Caco-2 (cell line): ENCODE measurements at regions of chr22 and their contacts with region 1.

Region 1: DNA sequence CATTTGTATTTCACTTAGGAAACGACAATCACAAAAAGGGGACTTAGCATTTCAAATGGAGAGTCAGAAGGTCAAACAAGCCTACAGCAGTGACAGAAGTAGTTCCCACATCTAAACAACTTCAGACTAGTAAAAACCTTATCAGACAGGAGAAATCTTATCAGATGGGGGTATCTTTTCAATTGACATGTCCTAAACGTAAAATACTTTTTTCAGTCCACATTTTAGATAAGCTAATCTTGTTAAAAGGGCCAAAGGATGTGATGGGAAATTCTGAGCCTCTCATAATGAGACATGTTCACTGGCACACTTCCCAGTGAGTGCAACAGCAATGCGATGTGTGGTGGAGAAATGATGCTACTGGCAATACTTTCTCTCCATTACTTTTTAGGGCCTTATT is 2.4 kb downstream of the MAPK1 start:
- DNase-seq: no peak
- H3K4me3 ChIP-seq: no peak overlapping the region
- H3K4me3 Mint-ChIP-seq: peak overlapping the region; percentile 48
- H3K27ac Mint-ChIP-seq: no peak overlapping the region
- H3K4me1 ChIP-seq: peaks cover 6% of the 10 kb centered on the region; the same call in 1 of the 2 replicates
- H3K4me1 Mint-ChIP-seq: peaks cover 47% of the 10 kb centered on the region
- H3K27me3 ChIP-seq: no peaks in the 10 kb centered on the region
- H3K27me3 Mint-ChIP-seq: no peaks in the 10 kb centered on the region
- CTCF ChIP-seq: no peak

Region 2: GRCh38 chr22:21807544-21808529 is 57.2 kb before region 1 on chr22:
- CTCF ChIA-PET with region 1: no interaction called
- POLR2A ChIA-PET with region 1: no interaction called
- intact Hi-C with region 1: no loop called
- DNase-seq: no peak
- H3K4me3 ChIP-seq: no peak overlapping the region
- H3K4me3 Mint-ChIP-seq: no peak overlapping the region
- H3K27ac Mint-ChIP-seq: no peak overlapping the region
- H3K4me1 ChIP-seq: no peaks in the 10 kb centered on the region
- H3K4me1 Mint-ChIP-seq: no peaks in the 10 kb centered on the region
- H3K27me3 ChIP-seq: no peaks in the 10 kb centered on the region
- H3K27me3 Mint-ChIP-seq: no peaks in the 10 kb centered on the region
- CTCF ChIP-seq: no peak

Region 3: DNA sequence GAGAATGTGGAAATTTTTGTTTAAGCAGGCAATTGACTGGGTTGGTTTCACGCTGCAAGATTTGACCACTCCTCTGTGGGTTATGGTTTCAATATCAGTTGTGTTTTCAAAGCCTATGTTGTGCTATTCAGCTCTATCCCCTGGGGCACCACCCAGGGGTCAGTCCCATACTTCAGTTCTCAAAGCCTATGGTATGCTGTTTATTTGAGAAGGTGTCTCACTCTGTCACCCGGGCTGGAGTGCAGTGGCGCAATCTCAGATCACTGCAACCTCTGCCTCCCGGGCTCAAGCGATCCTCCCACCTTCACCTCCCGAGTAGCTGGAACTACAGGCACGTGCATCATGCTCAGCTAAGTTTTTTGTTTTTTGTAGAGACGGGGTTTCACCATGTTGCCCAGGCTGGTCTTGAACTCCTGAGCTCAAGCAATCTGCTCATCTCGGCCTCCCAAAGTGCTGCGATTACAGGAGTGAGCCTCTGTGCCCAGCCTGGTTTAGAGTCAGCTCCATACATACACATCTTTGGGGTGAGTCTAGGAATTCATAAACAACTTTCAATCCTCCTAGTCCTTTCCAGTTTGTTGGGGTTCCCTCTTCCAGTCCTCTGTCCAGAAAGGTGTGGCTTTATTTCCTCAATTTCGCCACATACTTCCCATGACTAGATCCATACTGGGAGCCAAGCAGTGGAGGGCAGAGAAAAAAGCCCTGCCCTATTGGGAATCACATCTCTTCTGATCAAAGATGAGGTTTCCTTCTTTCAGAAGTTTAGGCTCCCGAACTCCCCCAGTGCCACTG is 37.5 kb after region 1 on chr22:
- CTCF ChIA-PET with region 1: interaction called, 4 read pairs
- POLR2A ChIA-PET with region 1: no interaction called
- intact Hi-C with region 1: loop called (anchors 2 kb)
- DNase-seq: peak; percentile 65 to 72
- H3K4me3 ChIP-seq: no peak overlapping the region
- H3K4me3 Mint-ChIP-seq: no peak overlapping the region
- H3K27ac Mint-ChIP-seq: peak overlapping the region; percentile 48
- H3K4me1 ChIP-seq: no peaks in the 10 kb centered on the region; the same call in 1 of the 2 replicates
- H3K4me1 Mint-ChIP-seq: no peaks in the 10 kb centered on the region
- H3K27me3 ChIP-seq: no peaks in the 10 kb centered on the region
- H3K27me3 Mint-ChIP-seq: no peaks in the 10 kb centered on the region
- CTCF ChIP-seq: no peak